Esophagus squamous epithelium (tissue), 5 donors: ENCODE measurements at regions of chr1 and their contacts with region 1.

Region 1: DNA sequence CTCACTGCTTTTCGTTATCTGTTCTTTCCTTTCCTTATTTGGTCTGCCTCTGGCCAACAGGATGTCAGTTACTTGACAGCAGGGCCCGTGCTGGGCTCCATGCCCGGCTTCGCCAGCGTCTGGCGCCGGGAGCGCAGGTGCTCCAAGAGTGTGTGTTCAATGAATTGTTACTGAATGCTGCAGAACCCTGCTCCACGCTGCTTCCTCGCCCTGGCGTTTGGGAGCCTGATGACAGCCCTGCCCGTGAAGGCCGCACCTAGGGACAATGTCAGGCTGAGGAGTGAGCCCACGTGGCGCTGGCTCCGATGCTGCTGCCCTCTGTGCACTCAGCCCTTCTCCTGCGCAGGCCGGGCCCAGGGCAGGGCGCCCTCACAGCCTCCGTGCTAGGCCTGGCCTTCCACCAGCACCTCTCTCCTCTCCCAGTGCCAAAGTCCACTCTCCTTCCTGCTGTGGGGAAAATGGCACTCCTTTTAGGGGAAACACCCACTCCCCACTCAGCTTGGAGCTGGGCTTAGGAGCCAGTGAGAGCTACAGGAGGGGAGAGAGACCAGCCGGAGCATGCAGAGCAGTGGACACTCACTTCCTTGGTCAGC is 51.4 kb downstream of the ACBD3 start:
- DNase-seq: no peak
- H3K4me3 ChIP-seq: peak overlapping the region in 2 of 4 donors; percentile 4 to 11
- H3K27ac ChIP-seq: peak overlapping the region; percentile 74 to 97 (median 86)
- H3K4me1 ChIP-seq: peaks cover 27 to 59% (median 36%) of the 10 kb centered on the region in 3 donors
- H3K27me3 ChIP-seq: no peaks in the 10 kb centered on the region
- CTCF ChIP-seq: peak in 1 of 6 experiments; percentile 11
- POLR2A ChIP-seq: no peak

Region 2: DNA sequence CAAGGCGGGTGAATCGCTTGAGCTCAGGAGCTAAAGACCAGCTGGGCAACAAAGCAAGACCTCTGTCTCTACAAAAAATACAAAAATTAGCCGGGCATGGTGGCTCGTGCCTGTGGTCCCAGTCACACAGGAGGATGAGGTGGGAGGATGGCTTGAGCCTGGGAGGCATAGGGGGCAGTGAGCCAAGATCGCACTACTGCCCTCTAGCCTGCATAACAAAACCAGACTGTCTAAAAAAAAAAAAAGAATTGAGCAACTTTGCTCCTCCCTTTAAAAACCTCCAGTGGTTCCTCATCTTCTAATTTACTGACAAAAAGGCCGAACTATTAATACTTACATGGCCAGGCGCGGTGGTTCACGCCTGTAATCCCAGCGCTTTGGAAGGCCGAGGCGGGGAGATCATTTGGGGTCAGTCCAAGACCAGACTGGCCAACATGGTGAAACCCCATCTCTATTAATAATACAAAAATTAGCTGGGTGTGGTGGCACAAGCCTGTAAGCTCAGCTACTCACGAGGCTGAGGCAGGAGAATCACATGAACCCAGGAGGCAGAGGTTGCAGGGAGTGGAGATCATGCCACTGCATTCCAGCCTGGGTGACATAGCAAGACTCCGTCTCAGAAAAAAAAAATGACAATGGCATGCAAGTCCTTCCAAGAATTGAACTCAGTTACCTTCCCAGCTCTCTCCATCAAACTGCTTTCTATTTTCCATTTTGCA is 47.0 kb after region 1 on chr1:
- intact Hi-C with region 1: loop called (anchors 5 kb)
- DNase-seq: no peak
- H3K4me3 ChIP-seq: peak overlapping the region in 1 of 4 donors; percentile 18
- H3K27ac ChIP-seq: peak overlapping the region; percentile 49 to 70 (median 63)
- H3K4me1 ChIP-seq: peaks cover 23 to 75% (median 32%) of the 10 kb centered on the region in 3 donors
- H3K27me3 ChIP-seq: no peaks in the 10 kb centered on the region
- CTCF ChIP-seq: peak in 4 of 6 experiments; percentile 11 to 41 (median 26)
- POLR2A ChIP-seq: no peak